Activated T-helper 2 cell treated with anti-CD3 and anti-CD28 coated beads, Interferon-gamma antibody, Interleukin-2, Interleukin-4, amounts not matched to agents 10 μg/mL and 5 μg/mL and 100 μg/mL, durations not matched to agents 14 hours and 24 hours and 36 hours (primary cell): ENCODE measurements at regions of chr9 and their contacts with region 1.

Region 1: DNA sequence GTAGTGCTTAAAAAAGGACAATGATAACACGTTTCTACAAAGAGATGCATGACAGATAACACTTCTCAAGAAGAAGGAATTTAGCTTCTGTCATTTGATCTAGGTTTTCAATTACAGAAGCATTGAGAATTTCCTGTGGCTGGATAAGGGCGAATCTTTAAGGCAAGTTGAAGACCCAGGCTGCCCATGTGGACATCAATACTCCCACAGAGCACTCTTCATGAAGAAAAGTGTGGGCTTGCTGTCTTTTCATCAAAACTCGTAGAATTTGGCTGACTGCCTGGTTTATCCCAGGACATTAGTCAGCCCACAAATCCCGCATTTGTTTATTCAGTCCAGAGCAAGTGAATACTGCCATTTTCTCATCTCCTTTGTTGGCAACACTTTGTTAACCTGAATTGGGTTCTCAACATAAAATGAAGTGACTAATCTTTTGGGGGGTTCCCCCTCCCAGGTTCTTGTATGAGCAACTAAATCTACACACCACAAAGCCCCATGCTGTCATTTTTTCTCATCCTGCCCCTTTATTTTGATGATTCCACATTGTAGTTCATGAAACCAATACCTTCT is 43.4 kb upstream of the CDKN2B start:
- DNase-seq: no peak
- H3K4me3 Mint-ChIP-seq: no peak overlapping the region
- H3K27ac Mint-ChIP-seq: peak overlapping the region; percentile 20
- H3K4me1 Mint-ChIP-seq: peaks cover 39% of the 10 kb centered on the region
- H3K27me3 Mint-ChIP-seq: peaks cover 22% of the 10 kb centered on the region

Region 2: DNA sequence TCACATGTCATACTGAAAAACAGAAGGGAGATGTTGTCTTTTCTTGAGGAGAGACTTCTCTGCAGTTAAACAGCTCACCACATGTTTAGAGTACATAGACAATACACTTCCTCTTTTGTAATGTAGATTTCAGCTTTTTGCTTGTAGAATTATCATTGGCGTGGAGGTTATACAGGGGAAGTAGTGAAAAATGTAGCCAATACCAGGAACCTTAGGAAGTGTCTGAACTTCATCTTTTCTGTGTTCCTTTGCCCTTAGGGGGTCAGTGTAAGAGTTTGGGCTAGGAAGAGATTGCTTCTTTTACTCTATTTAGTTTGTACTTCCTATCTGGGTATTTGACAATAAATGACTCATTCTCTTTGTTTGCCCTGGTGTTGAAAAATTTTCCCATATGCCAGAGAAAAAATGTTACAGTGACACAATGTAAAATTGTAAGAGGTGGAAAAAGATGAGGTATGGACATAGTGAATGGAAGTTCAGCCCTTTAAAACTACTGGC is 22.3 kb before region 1 on chr9:
- intact Hi-C with region 1: loop called (anchors 1 kb)
- DNase-seq: no peak
- H3K4me3 Mint-ChIP-seq: no peak overlapping the region
- H3K27ac Mint-ChIP-seq: peak overlapping the region; percentile 34
- H3K4me1 Mint-ChIP-seq: peaks cover 35% of the 10 kb centered on the region
- H3K27me3 Mint-ChIP-seq: peaks cover 9% of the 10 kb centered on the region

Region 3: DNA sequence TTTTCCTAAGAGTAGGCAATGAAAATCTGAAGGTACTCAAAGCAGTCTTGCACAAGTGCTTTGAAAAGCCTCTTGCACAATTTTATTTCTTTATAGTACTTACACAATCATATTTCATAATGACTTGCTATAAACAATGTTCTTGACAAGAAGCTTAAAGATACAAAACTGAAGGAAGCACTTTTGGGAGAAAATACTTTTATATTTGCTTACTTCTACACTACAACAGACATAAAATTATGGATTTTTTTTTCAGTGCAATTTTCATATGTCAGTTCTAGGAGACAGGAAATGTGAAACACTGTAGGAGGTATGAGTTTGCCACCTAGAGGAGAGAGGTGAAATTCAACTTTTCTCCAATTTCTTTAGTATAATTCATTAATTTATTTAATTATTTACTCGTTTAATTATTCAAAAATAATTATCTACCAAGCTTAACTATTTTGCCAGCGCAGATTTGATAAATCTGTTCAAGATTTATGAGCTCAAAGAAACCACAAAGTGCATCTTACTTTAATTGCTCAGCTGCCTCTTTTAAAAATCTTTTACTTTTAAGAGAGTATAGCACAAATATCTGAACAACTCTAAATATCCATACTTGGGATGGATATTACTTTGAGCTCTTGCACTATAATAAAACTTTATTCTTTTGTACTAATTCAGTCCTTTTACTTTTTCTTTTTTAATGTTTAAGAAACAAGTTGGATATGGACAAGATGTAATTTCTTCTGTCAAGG is 14.3 kb before region 1 on chr9:
- intact Hi-C with region 1: loop called (anchors 1 kb)
- DNase-seq: no peak
- H3K4me3 Mint-ChIP-seq: no peak overlapping the region
- H3K27ac Mint-ChIP-seq: no peak overlapping the region
- H3K4me1 Mint-ChIP-seq: peaks cover 46% of the 10 kb centered on the region
- H3K27me3 Mint-ChIP-seq: peaks cover 26% of the 10 kb centered on the region

Region 4: GRCh38 chr9:22073349-22073748 is 20.9 kb after region 1 on chr9:
- intact Hi-C with region 1: loop called (anchors 1 kb)
- DNase-seq: no peak
- H3K4me3 Mint-ChIP-seq: no peak overlapping the region
- H3K27ac Mint-ChIP-seq: no peak overlapping the region
- H3K4me1 Mint-ChIP-seq: peaks cover 44% of the 10 kb centered on the region
- H3K27me3 Mint-ChIP-seq: peaks cover 17% of the 10 kb centered on the region

Region 5: GRCh38 chr9:22097697-22098096 is 45.2 kb after region 1 on chr9:
- intact Hi-C with region 1: loop called (anchors 2 kb)
- DNase-seq: no peak
- H3K4me3 Mint-ChIP-seq: no peak overlapping the region
- H3K27ac Mint-ChIP-seq: peak overlapping the region; percentile 44
- H3K4me1 Mint-ChIP-seq: peaks cover 42% of the 10 kb centered on the region
- H3K27me3 Mint-ChIP-seq: peaks cover 42% of the 10 kb centered on the region

Region 6: DNA sequence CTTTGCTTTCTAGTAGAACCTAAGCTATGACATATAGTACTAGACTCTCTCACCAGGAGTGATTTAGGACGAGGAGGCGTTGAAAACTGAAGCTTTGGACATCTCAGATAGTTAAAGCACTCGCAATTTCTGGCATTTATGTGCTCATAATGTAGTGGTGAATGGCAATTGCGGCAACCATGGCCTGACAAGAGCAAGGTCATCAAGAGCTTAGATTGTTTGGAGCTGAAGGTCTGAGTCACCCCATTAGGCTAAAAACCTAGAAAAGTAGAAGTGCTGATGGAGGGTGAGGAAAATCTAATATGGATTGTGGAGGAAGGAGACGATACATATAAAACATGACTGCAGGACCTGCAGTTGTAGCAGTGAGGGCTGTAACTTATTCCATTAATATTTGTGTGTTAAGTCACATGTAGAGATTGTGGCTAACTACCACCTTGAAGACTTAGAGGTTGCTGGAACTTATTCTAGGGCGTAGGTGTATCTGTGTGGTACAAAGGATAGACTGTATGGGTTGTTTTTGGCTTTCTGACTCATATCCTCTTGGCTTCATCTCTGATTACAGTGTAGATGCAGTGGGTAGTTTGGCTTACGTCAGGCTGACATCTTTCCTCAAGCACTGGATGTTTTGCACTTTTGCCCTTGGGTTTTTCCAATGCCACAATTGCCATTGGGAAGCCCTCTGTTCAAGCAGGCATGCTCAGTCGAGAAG is 95.5 kb after region 1 on chr9:
- intact Hi-C with region 1: loop called (anchors 1 kb)
- DNase-seq: peak; percentile 14
- H3K4me3 Mint-ChIP-seq: no peak overlapping the region
- H3K27ac Mint-ChIP-seq: peak overlapping the region; percentile 4
- H3K4me1 Mint-ChIP-seq: peaks cover 36% of the 10 kb centered on the region
- H3K27me3 Mint-ChIP-seq: peaks cover 26% of the 10 kb centered on the region